Left lung (tissue), 14 donors: ENCODE measurements at regions of chr2 and their contacts with region 1.

Region 1: DNA sequence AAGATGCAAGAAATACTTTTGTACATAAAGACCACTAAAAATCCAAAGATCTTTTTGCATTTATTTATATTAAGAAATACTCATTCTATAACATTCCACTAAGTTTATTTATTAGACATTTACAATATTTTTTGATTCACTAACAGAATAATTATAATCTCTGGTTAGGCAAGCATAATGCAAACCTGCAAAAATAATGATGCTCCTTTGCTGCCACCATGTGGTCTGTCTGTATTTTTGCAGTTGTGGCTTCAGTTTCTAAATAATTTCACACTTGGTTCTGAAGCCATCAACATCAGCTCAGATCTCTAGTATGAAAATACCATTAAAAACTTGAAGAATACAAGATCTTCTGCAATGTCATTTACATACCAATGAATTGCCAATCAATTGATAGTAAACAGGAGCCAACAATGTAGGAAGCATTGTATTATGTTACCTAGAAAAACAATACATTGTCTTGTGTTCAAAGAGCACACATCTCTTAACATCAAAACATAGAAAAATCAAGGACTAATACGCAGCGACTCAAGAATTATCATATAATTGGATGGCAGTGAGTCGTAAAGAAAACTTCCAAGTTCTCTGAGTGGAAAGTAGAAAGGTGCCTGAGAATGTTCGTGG is 28.8 kb upstream of the WDR75 start:
- DNase-seq: peak in 2 of 4 donors; percentile 65 to 79
- ATAC-seq: peak; percentile 84
- H3K4me3 ChIP-seq: no peak overlapping the region
- H3K27ac ChIP-seq: peak overlapping the region in 1 of 2 donors; percentile 4
- H3K4me1 ChIP-seq: peaks cover 0 to 7% of the 10 kb centered on the region in 2 donors
- H3K27me3 ChIP-seq: no peaks in the 10 kb centered on the region
- CTCF ChIP-seq: peak; percentile 62 to 69

Region 2: GRCh38 chr2:188983427-188984064 is 428.9 kb before region 1 on chr2:
- intact Hi-C with region 1: loop called in 1 of 2 experiments (anchors 10 kb)
- DNase-seq: no peak
- ATAC-seq: peak; percentile 32
- H3K4me3 ChIP-seq: no peak overlapping the region
- H3K27ac ChIP-seq: peak overlapping the region in 1 of 2 donors; percentile 71
- H3K4me1 ChIP-seq: peaks cover 0 to 2% of the 10 kb centered on the region in 2 donors
- H3K27me3 ChIP-seq: no peaks in the 10 kb centered on the region
- CTCF ChIP-seq: peak in 1 of 2 donors; percentile 22

Region 3: GRCh38 chr2:189096769-189097447 is 315.5 kb before region 1 on chr2:
- intact Hi-C with region 1: loop called in 1 of 2 experiments (anchors 10 kb)
- DNase-seq: no peak
- ATAC-seq: peak; percentile 13
- H3K4me3 ChIP-seq: no peak overlapping the region
- H3K27ac ChIP-seq: peak overlapping the region in 1 of 2 donors; percentile 21
- H3K4me1 ChIP-seq: peaks cover 0 to 7% of the 10 kb centered on the region in 2 donors
- H3K27me3 ChIP-seq: no peaks in the 10 kb centered on the region
- CTCF ChIP-seq: no peak